CD8-positive, alpha-beta T cell (primary cell): ENCODE measurements at regions of chr1 and their contacts with region 1.

Region 1: DNA sequence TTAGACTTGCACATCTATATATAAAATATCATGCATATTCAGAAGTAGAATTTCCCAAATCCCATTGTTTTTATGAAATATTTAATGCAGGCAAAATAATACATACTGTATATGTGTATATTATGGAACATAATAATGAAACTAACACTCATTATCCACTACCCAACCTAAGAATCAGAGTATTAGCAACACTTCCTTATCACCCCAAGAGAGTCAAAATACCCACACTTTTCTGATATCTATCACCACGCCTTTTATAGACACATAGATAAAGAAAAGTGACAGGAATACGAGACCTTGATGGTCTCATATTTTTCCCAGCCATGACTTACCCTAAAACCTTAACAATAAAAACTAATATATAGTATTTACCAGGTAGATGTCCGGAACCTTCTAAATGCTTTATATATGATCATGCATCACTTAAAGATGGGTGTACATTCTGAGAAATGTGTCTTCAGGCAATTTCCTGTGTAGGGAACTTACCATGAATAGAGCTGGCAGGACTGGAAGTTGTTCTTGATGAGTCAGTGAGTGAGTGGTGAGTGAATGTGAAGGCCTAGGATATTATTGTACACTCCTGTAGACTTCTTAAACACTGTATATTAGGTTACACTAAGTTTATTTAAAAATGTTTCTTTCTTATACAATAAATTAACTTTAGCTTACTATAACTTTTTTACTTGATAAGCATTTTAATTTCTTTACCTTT is 45.5 kb downstream of the TNFSF4 start:
- DNase-seq: no peak
- ATAC-seq: no peak
- H3K4me3 ChIP-seq: no peak overlapping the region
- H3K4me3 Mint-ChIP-seq: no peak overlapping the region
- H3K27ac ChIP-seq: no peak overlapping the region
- H3K27ac Mint-ChIP-seq: no peak overlapping the region
- H3K4me1 ChIP-seq: no peaks in the 10 kb centered on the region
- H3K4me1 Mint-ChIP-seq: no peaks in the 10 kb centered on the region
- H3K27me3 ChIP-seq: no peaks in the 10 kb centered on the region
- H3K27me3 Mint-ChIP-seq: no peaks in the 10 kb centered on the region
- CTCF ChIP-seq: no peak

Region 2: DNA sequence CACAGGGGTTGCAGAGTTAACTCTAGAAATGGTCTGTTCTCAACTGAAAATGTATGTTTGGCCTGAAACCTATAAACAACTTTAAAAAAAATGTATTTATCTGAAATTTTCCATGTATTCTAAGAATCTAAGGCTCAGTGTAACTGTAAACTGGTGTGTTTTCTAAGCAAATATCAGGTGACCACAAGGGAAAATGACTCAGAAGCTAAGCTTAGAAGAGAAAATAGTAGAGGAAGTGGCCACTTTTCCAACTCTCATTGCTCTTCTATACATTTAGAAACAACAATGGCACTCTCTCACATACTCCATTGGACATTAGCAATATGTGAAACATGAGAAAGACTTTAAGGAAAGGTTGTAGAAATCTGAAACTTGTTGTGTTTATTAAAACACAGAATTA is 118.4 kb before region 1 on chr1:
- CTCF ChIA-PET with region 1: no interaction called
- POLR2A ChIA-PET with region 1: no interaction called
- intact Hi-C with region 1: loop called in 1 of 2 experiments (anchors 10 kb)
- DNase-seq: no peak
- ATAC-seq: no peak
- H3K4me3 ChIP-seq: no peak overlapping the region
- H3K4me3 Mint-ChIP-seq: no peak overlapping the region
- H3K27ac ChIP-seq: no peak overlapping the region
- H3K27ac Mint-ChIP-seq: no peak overlapping the region
- H3K4me1 ChIP-seq: no peaks in the 10 kb centered on the region
- H3K4me1 Mint-ChIP-seq: peaks cover 4% of the 10 kb centered on the region
- H3K27me3 ChIP-seq: no peaks in the 10 kb centered on the region
- H3K27me3 Mint-ChIP-seq: no peaks in the 10 kb centered on the region
- CTCF ChIP-seq: no peak

Region 3: GRCh38 chr1:173175514-173176145 is 14.0 kb after region 1 on chr1:
- CTCF ChIA-PET with region 1: no interaction called
- POLR2A ChIA-PET with region 1: no interaction called
- intact Hi-C with region 1: no loop called
- DNase-seq: no peak
- ATAC-seq: no peak
- H3K4me3 ChIP-seq: no peak overlapping the region
- H3K4me3 Mint-ChIP-seq: no peak overlapping the region
- H3K27ac ChIP-seq: no peak overlapping the region
- H3K27ac Mint-ChIP-seq: no peak overlapping the region
- H3K4me1 ChIP-seq: no peaks in the 10 kb centered on the region
- H3K4me1 Mint-ChIP-seq: no peaks in the 10 kb centered on the region
- H3K27me3 ChIP-seq: no peaks in the 10 kb centered on the region
- H3K27me3 Mint-ChIP-seq: no peaks in the 10 kb centered on the region
- CTCF ChIP-seq: no peak

Region 4: GRCh38 chr1:174639461-174639860 is 1477.8 kb after region 1 on chr1:
- CTCF ChIA-PET with region 1: no interaction called
- POLR2A ChIA-PET with region 1: no interaction called
- intact Hi-C with region 1: no loop called
- DNase-seq: no peak
- ATAC-seq: no peak
- H3K4me3 ChIP-seq: no peak overlapping the region
- H3K4me3 Mint-ChIP-seq: no peak overlapping the region
- H3K27ac ChIP-seq: no peak overlapping the region
- H3K27ac Mint-ChIP-seq: no peak overlapping the region
- H3K4me1 ChIP-seq: no peaks in the 10 kb centered on the region
- H3K4me1 Mint-ChIP-seq: no peaks in the 10 kb centered on the region
- H3K27me3 ChIP-seq: no peaks in the 10 kb centered on the region
- H3K27me3 Mint-ChIP-seq: no peaks in the 10 kb centered on the region
- CTCF ChIP-seq: no peak